CD4-positive, alpha-beta memory T cell (primary cell): ENCODE measurements at regions of chr1 and their contacts with region 1.

Region 1: DNA sequence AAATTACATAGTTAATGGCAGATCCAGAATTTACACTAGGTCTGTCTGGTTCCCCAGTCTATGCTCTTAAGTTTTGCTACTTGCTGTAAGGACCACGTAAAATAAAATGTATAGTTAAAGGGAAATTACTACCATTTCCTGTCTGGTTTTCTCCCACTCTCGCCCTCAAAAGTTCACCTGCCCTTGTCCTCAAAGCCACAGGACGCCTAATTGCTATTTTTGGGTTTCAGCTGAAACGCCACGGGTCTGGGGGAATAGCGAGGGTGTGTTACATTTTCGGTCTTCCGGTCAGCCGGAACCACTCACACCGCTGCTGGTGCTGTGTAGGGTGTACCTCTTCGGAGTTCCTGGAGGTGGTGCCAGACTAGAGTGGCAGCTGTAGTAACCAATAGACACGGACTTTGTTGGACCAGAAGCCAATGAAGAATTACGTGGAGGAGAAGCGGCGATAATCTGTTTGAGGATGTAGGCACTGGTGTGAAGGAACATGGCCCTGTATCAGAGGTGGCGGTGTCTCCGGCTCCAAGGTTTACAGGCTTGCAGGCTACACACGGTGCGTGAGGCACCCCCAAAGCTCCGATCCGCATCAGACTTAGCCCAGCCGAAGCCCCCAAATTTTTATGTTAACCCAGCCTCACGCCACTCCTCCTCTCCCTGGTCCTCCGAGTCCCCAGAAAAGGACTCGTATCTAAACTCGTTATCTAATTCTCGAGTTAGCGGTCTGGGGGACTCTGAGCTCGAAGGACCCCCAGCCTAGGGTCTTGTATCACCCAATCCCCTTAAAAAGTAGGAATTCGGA is at the start of gene TARS2:
- DNase-seq: peak; percentile 95 to 96 (median 96)
- H3K4me3 ChIP-seq: peak within 1 kb of the TSS; percentile 78 to 83
- H3K4me3 Mint-ChIP-seq: peak within 1 kb of the TSS; percentile 94 to 100 (median 98)
- H3K27ac ChIP-seq: peak within 1 kb of the TSS; percentile 77
- H3K27ac Mint-ChIP-seq: peak within 1 kb of the TSS; percentile 72 to 100 (median 99)
- H3K4me1 ChIP-seq: peaks cover 13% of the 10 kb centered on the region
- H3K4me1 Mint-ChIP-seq: peaks cover 9 to 26% (median 20%) of the 10 kb centered on the region in 4 donors
- H3K27me3 ChIP-seq: no peaks in the 10 kb centered on the region
- H3K27me3 Mint-ChIP-seq: no peaks in the 10 kb centered on the region
- total RNA-seq, gene TARS2: 32.3 to 35.4 TPM

Region 2: DNA sequence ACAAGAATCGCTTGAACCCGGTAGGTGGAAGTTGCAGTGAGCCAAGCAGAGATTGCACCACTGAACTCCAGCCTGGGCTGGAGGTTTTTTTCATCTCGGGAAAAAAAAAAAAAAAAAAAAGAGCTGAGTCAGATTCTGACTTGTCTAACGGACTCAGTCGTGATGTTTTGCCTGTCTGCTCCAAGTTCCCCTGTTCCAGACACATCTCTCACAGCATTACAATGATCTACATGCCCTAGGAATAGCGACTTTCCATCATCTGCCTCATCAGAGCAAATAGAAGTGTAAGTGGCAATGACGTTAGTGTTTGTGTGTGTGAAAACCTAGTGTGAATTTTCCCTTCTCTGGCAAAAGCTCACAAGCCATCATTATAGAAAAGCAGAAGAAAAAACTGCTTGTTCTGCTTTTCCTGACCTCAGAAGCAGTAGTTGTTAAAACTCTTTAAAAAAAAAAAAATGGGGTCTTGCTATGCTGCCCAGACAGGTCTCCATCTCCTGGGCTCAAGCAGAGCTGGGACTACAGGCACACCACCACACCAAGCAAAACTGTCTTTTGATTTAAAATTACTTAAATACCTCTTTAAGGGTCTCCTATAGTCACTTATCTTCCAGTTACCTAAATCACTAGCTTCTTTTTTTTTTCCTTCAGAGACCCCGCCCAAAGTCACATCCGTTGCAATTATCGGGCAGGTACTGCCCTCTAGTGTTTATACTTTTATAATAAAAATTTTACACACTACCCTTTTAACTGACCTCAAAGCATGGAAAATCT is 300.2 kb before region 1 on chr1:
- CTCF ChIA-PET with region 1: no interaction called
- POLR2A ChIA-PET with region 1: no interaction called
- intact Hi-C with region 1: no loop called
- DNase-seq: peak; percentile 42 to 71 (median 65)
- H3K4me3 ChIP-seq: no peak overlapping the region
- H3K4me3 Mint-ChIP-seq: peak overlapping the region in 7 of 8 donors; percentile 1 to 65 (median 44)
- H3K27ac ChIP-seq: no peak overlapping the region
- H3K27ac Mint-ChIP-seq: peak overlapping the region in 4 of 7 donors; percentile 19 to 85 (median 70)
- H3K4me1 ChIP-seq: peaks cover 8% of the 10 kb centered on the region
- H3K4me1 Mint-ChIP-seq: peaks cover 5 to 13% (median 8%) of the 10 kb centered on the region in 4 donors
- H3K27me3 ChIP-seq: no peaks in the 10 kb centered on the region
- H3K27me3 Mint-ChIP-seq: no peaks in the 10 kb centered on the region

Region 3: GRCh38 chr1:150498342-150498741 is 11.2 kb after region 1 on chr1:
- CTCF ChIA-PET with region 1: no interaction called
- POLR2A ChIA-PET with region 1: interaction called, 16 read pairs
- intact Hi-C with region 1: no loop called
- DNase-seq: no peak
- H3K4me3 ChIP-seq: no peak overlapping the region
- H3K4me3 Mint-ChIP-seq: no peak overlapping the region
- H3K27ac ChIP-seq: no peak overlapping the region
- H3K27ac Mint-ChIP-seq: peak overlapping the region in 1 of 7 donors; percentile 66
- H3K4me1 ChIP-seq: no peaks in the 10 kb centered on the region
- H3K4me1 Mint-ChIP-seq: peaks cover 0 to 3% (median 0%) of the 10 kb centered on the region in 4 donors
- H3K27me3 ChIP-seq: no peaks in the 10 kb centered on the region
- H3K27me3 Mint-ChIP-seq: no peaks in the 10 kb centered on the region

Region 4: DNA sequence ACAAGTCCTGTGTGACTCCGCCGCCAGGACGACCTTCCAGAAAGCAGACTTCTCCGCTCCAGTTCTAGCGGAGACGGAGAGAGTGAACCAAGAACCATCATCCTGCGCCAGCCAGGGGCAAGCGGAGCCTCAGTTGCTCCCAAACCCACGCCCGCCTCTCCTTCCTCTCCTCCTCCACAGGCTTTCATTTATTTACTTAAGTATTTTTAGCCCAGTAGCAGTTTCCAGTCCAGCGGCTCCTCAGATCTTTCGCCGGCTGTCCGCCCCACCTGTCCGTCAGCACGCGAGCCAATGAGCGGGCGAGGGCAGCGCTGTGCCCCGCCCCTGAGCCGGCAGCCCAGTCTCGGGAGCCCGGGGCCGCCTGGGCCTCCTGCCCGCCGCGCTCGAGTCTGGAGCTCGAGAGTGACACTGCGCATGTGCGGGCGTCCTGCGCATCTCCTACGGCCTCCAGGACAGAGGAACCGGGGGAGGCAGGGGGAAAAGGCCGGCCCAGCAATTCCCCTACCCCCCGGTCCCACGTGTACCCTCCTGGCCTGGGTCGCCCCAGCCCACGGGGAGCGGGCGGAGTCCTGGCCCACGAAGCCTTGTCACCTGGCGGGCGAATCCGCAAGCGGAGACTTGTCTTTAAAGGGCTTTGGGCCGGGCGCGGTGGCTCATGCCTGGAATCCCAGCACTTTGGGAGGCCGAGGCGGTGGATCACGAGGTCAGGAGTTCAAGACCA is 28.3 kb after region 1 on chr1 and contains the start of gene FALEC:
- CTCF ChIA-PET with region 1: no interaction called
- POLR2A ChIA-PET with region 1: interaction called, 31 read pairs
- intact Hi-C with region 1: loop called (anchors 1 kb)
- DNase-seq: peak; percentile 87 to 91 (median 89)
- H3K4me3 ChIP-seq: peak within 1 kb of the TSS; percentile 69 to 73
- H3K4me3 Mint-ChIP-seq: peak within 1 kb of the TSS; percentile 83 to 94 (median 92)
- H3K27ac ChIP-seq: peak within 1 kb of the TSS; percentile 53
- H3K27ac Mint-ChIP-seq: peak within 1 kb of the TSS; percentile 61 to 93 (median 89)
- H3K4me1 ChIP-seq: peaks cover 11% of the 10 kb centered on the region
- H3K4me1 Mint-ChIP-seq: peaks cover 8 to 20% (median 12%) of the 10 kb centered on the region in 4 donors
- H3K27me3 ChIP-seq: no peaks in the 10 kb centered on the region
- H3K27me3 Mint-ChIP-seq: no peaks in the 10 kb centered on the region
- total RNA-seq, gene FALEC: 0.64 TPM in 1 of 2 experiments, not detected in the other